ENCODE measurements at regions of chr9 and their contacts with region 1.

Region 1: DNA sequence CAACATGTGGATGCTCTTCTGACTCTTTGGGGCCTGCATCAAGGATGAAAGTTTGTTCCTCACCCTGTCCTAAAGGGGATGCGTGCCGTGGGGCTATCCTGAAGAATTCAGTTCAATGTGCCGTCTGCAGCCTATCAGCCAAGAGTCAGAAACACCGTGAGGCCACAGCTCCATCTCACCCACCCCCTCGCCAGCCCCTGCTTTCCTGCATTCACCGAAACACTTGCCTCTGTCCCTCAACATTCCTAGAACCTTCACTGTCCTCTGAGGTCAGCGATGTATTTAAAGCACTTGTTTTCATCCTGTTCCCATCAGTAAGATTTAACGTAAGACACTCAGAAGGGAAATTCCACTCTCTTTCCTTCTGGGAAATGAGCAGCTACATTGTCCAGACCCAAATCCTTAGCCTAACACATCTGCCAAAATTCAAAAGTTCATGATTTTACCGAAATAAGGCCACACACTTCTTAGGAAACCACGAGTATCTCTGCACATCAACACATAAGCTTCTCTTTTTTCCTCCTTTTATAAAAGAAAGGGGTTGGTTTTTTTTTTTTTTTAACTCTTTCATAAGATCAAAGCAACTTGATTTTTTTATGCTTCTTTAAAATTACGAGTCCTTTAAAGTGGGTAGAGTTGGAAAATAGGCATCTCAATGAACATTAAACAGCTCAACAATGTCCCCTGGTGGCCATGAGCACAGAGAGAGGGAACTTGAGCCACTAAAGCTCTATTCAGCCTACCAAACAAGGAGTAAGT is 100.7 kb downstream of the SUSD1 start:
- DNase-seq: peak; percentile 65 to 90 (median 78)
- H3K4me3 ChIP-seq: no peak overlapping the region
- H3K27ac ChIP-seq: peak overlapping the region; percentile 61 to 83
- H3K4me1 ChIP-seq: peaks cover 0 to 11% (median 11%) of the 10 kb centered on the region in 3 donors
- H3K27me3 ChIP-seq: no peaks in the 10 kb centered on the region
- CTCF ChIP-seq: peak; percentile 99

Region 2: DNA sequence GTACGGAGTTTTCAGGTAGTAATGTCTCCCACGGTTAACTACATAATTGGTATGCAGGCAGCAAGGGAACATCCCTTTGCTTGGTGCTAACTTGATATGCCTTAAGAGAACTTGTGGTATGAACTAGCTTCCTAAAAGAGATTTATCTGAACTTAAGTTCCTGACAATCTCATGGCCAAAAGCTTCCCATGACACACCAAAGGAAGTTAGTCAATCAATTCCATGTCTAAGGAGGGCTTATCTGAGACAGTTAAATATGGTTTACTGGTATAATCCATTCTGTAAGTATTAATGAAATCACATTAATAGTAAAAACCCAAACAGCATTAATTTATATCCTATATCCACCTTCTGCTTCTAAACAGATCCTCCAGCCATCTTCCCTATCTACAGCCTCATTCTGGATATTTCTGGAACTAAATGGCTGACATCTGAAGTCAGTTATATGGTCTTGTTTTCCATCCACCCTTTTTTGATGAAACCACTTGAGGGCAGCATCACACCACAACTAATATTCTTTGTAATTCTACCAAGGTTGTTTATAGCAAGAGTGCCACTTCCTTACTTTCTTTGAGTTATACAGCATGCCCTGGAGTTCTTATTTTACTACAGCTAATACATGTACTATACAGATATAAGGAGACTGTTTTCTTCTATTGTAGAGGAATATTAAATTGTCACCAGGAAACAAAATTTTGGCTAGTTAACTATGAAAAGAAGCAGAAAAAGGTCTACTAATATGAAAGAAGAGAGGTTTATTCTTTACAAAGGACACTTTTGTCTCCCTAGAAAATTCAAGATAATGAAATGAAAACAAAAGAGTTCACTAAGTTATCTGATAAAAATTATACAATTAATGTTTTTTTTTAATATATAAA is 314.4 kb before region 1 on chr9:
- intact Hi-C with region 1: loop called (anchors 5 kb)
- DNase-seq: peak in 4 of 5 donors; percentile 39 to 93 (median 78)
- H3K4me3 ChIP-seq: no peak overlapping the region
- H3K27ac ChIP-seq: no peak overlapping the region
- H3K4me1 ChIP-seq: no peaks in the 10 kb centered on the region
- H3K27me3 ChIP-seq: no peaks in the 10 kb centered on the region
- CTCF ChIP-seq: peak; percentile 68

Region 3: GRCh38 chr9:111926421-111926875 is 148.0 kb before region 1 on chr9:
- intact Hi-C with region 1: loop called (anchors 10 kb)
- DNase-seq: peak in 1 of 5 donors; percentile 77
- H3K4me3 ChIP-seq: no peak overlapping the region
- H3K27ac ChIP-seq: no peak overlapping the region
- H3K4me1 ChIP-seq: peaks cover 0 to 3% (median 0%) of the 10 kb centered on the region in 3 donors
- H3K27me3 ChIP-seq: no peaks in the 10 kb centered on the region
- CTCF ChIP-seq: no peak

Region 4: DNA sequence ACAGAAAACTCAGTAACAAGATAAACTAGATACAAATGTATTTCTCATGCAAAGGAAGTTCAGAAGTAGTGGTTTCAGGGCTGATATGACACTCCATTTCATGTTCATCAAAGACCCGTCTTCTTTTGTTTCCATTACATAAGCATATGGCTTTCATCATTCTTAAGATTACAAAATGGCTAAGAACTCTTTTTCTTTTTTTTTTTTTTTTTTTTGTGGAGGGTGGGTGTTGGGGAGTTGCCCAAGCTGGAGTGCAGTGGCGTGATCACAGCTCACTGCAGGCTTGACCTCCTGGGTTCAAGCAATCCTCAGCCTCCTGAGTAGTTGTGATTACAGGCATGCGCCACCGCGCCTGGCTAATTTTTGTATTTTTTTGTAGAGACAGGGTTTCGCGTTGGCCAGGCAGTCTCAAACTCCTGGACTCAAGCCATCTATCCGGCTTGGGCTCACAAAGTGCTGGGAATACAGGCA is 281.0 kb after region 1 on chr9:
- intact Hi-C with region 1: no loop called
- DNase-seq: peak in 3 of 5 donors; percentile 25 to 62 (median 51)
- H3K4me3 ChIP-seq: no peak overlapping the region
- H3K27ac ChIP-seq: no peak overlapping the region
- H3K4me1 ChIP-seq: peaks cover 0 to 2% (median 2%) of the 10 kb centered on the region in 3 donors
- H3K27me3 ChIP-seq: no peaks in the 10 kb centered on the region
- CTCF ChIP-seq: no peak

Measured in kidney (tissue), 22 donors.